WTC11 (cell line): ENCODE measurements at regions of chr13 and their contacts with region 1.

Region 1: GRCh38 chr13:99577934-99578917 is 77.0 kb downstream of the TM9SF2 start:
- DNase-seq: no peak
- ATAC-seq: peak; percentile 61
- H3K4me3 Mint-ChIP-seq: no peak overlapping the region
- H3K27ac Mint-ChIP-seq: no peak overlapping the region
- H3K4me1 Mint-ChIP-seq: peaks cover 3% of the 10 kb centered on the region; the same call in 1 of the 2 replicates
- H3K27me3 Mint-ChIP-seq: no peaks in the 10 kb centered on the region
- CTCF ChIP-seq: no peak

Region 2: GRCh38 chr13:99442273-99442895 is 135.8 kb before region 1 on chr13:
- CTCF ChIA-PET with region 1: interaction called, 10 read pairs
- POLR2A ChIA-PET with region 1: no interaction called
- DNase-seq: peak; percentile 27
- ATAC-seq: no peak; the same call in 1 of the 2 replicates
- H3K4me3 Mint-ChIP-seq: no peak overlapping the region
- H3K27ac Mint-ChIP-seq: no peak overlapping the region
- H3K4me1 Mint-ChIP-seq: peaks cover 32% of the 10 kb centered on the region
- H3K27me3 Mint-ChIP-seq: no peaks in the 10 kb centered on the region
- CTCF ChIP-seq: peak; percentile 88

Region 3: GRCh38 chr13:99542788-99543406 is 35.3 kb before region 1 on chr13:
- CTCF ChIA-PET with region 1: no interaction called
- POLR2A ChIA-PET with region 1: no interaction called
- DNase-seq: no peak
- ATAC-seq: no peak
- H3K4me3 Mint-ChIP-seq: no peak overlapping the region
- H3K27ac Mint-ChIP-seq: no peak overlapping the region
- H3K4me1 Mint-ChIP-seq: peaks cover 6% of the 10 kb centered on the region
- H3K27me3 Mint-ChIP-seq: no peaks in the 10 kb centered on the region
- CTCF ChIP-seq: no peak

Region 4: GRCh38 chr13:99600318-99600717 is 22.1 kb after region 1 on chr13:
- CTCF ChIA-PET with region 1: interaction called, 17 read pairs
- POLR2A ChIA-PET with region 1: no interaction called
- DNase-seq: peak; percentile 77
- ATAC-seq: peak; percentile 99
- H3K4me3 Mint-ChIP-seq: no peak overlapping the region
- H3K27ac Mint-ChIP-seq: no peak overlapping the region
- H3K4me1 Mint-ChIP-seq: peaks cover 19% of the 10 kb centered on the region
- H3K27me3 Mint-ChIP-seq: no peaks in the 10 kb centered on the region
- CTCF ChIP-seq: peak; percentile 45; the same call in 1 of the 2 replicates

Region 5: DNA sequence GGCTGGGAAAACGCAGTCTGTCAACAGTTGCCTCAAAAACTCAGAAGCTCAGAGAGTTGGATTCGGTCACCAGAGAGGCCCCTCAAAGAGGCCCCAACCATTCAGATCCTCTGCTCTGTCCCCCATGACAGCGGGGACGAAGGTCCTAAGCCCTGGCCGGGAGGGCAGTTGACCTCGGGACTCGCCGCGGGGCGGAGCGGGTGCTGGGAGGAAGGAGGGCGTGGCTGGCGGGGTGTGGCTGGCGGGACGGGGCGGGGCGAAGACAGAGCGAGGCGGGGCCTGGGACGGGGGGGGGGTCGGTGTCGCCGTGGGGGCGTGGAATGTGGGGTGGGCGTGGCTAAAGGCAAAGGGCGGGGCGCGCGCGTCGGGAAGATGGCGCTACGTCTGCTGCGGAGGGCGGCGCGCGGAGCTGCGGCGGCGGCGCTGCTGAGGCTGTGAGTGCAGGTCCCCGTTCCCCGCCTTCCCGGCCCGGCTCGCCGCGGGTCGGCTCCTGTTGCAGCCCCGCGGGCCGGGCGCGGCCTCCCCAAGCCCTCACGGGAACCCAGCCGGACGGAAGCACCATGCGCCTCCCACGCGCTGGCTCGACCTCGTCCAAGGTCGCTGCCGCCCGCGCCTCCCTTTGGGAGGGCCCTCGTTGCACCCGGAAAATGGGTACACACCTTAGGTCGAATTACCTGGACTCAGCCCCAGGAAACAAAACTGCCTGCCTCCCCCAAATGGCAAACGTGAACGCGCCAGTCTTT is 28.3 kb after region 1 on chr13:
- CTCF ChIA-PET with region 1: interaction called, 17 read pairs
- POLR2A ChIA-PET with region 1: no interaction called
- DNase-seq: peak; percentile 90
- ATAC-seq: peak; percentile 89
- H3K4me3 Mint-ChIP-seq: peak within 1 kb of the TSS; percentile 79
- H3K27ac Mint-ChIP-seq: peak within 1 kb of the TSS; percentile 85
- H3K4me1 Mint-ChIP-seq: peaks cover 28% of the 10 kb centered on the region
- H3K27me3 Mint-ChIP-seq: no peaks in the 10 kb centered on the region
- CTCF ChIP-seq: no peak

Region 6: GRCh38 chr13:99614385-99614885 is 36.2 kb after region 1 on chr13:
- CTCF ChIA-PET with region 1: interaction called, 17 read pairs
- POLR2A ChIA-PET with region 1: interaction called, 3 read pairs
- DNase-seq: peak; percentile 44
- ATAC-seq: peak; percentile 81
- H3K4me3 Mint-ChIP-seq: no peak overlapping the region
- H3K27ac Mint-ChIP-seq: no peak overlapping the region
- H3K4me1 Mint-ChIP-seq: peaks cover 46% of the 10 kb centered on the region
- H3K27me3 Mint-ChIP-seq: no peaks in the 10 kb centered on the region
- CTCF ChIP-seq: no peak

Region 7: GRCh38 chr13:99969919-99970621 is 391.8 kb after region 1 on chr13:
- CTCF ChIA-PET with region 1: no interaction called
- POLR2A ChIA-PET with region 1: no interaction called
- DNase-seq: peak; percentile 81
- ATAC-seq: peak; percentile 19
- H3K4me3 Mint-ChIP-seq: peak overlapping the region; percentile 91
- H3K27ac Mint-ChIP-seq: peak overlapping the region; percentile 85
- H3K4me1 Mint-ChIP-seq: peaks cover 57% of the 10 kb centered on the region
- H3K27me3 Mint-ChIP-seq: no peaks in the 10 kb centered on the region; the same call in 1 of the 2 replicates
- CTCF ChIP-seq: no peak